Left lung (tissue), 14 donors: ENCODE measurements at regions of chr15 and their contacts with region 1.

Region 1: DNA sequence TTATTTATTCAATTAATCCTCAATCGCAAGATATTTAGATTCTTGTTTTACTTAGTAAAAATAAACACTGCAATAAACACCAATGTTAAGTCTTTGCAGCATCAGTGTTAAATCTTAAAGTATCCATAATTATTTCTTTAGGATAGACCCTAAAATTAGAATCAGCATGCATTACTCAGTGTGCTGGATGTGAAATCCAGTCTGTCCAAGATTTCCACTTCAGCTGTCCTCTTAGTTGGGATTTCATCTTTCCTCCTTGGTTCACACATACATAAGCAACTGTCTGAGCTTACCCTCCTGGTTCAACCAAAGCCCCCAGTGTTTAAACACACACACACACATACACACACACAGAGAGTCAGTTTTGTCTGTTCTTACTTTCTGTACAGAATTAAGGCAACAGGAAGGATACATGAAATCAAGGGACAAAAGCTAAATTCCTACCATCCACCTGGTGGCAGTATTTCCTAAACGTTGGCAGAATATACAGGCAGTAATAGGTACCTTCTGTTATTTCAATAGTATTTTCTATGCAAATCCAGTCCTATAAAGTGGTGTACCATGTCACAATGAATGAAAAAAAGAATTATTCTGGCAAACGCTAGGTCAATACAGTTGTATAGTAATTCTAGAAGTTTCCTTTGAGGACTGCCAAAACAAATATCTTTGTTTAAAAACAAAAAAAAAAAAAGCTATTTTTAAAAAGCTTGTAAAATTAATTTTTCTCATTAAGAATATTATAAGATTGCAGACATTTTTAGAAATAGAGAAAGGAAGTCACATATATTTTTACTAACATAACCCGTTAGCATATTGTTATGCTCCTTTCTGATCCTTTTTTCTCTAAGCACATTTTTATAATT is 27.3 kb upstream of the DMXL2 start:
- DNase-seq: peak in 2 of 4 donors; percentile 57 to 80
- ATAC-seq: peak; percentile 94
- H3K4me3 ChIP-seq: no peak overlapping the region
- H3K27ac ChIP-seq: no peak overlapping the region
- H3K4me1 ChIP-seq: no peaks in the 10 kb centered on the region
- H3K27me3 ChIP-seq: no peaks in the 10 kb centered on the region
- CTCF ChIP-seq: peak; percentile 64 to 71

Region 2: GRCh38 chr15:51776952-51777574 is 127.2 kb after region 1 on chr15:
- intact Hi-C with region 1: loop called (anchors 2 to 10 kb)
- DNase-seq: peak in 2 of 4 donors; percentile 67 to 81
- ATAC-seq: peak; percentile 98
- H3K4me3 ChIP-seq: no peak overlapping the region
- H3K27ac ChIP-seq: no peak overlapping the region
- H3K4me1 ChIP-seq: peaks cover 0 to 3% of the 10 kb centered on the region in 2 donors
- H3K27me3 ChIP-seq: no peaks in the 10 kb centered on the region
- CTCF ChIP-seq: peak; percentile 57 to 71